ENCODE measurements at regions of chr16 and their contacts with region 1.

Region 1: GRCh38 chr16:74998481-74999218 is at the start of gene ZNRF1:
- DNase-seq: peak; percentile 69 to 80
- ATAC-seq: peak; percentile 86
- H3K4me3 ChIP-seq: peak within 1 kb of the TSS; percentile 86 to 100 (median 94)
- H3K27ac ChIP-seq: peak within 1 kb of the TSS; percentile 82 to 94 (median 88)
- H3K4me1 ChIP-seq: peaks cover 20 to 24% of the 10 kb centered on the region in 2 donors
- H3K27me3 ChIP-seq: no peaks in the 10 kb centered on the region
- CTCF ChIP-seq: peak; percentile 83 to 90 (median 89)
- POLR2A ChIP-seq: peak; percentile 63 to 81
- total RNA-seq, gene ZNRF1: 21.7 to 37.1 (median 30.2) TPM

Region 2: DNA sequence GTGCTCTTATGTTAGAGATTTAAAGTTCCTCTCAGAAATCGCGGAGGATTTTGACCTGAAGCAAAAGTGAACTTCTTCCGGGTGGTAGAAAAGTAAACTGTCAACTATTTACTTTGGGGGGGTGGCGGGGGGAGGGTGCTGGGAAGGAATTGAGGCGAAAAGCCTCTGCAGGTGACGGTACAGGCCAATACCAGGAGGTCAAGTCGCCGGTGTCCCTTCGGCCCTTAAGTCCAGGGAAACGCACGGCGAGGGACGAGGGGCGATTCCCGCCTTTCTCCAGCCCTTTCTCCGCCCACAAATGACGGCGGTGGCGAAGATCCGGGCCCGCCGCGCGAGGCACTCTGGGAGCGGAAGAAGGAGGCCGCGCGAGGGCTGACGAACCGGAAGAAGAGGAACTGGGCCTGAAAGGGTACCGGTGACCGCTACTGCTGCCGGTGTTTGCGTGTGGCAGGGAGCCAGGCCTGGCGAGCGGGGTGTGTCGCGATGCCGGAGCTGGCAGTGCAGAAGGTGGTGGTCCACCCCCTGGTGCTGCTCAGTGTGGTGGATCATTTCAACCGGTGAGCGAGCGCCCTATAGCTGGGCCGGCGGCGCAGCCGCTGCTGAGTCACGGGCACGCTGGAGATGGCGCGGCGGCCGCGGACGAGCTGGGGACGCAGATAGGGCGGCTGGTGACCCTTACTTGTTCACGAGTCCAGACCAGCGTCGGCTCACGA is 702.1 kb before region 1 on chr16 and contains the start of gene PSMD7:
- in situ Hi-C with region 1: no loop called
- intact Hi-C with region 1: loop called (anchors 5 kb)
- DNase-seq: peak; percentile 86 to 89
- ATAC-seq: peak; percentile 96 to 97
- H3K4me3 ChIP-seq: peak within 1 kb of the TSS; percentile 76 to 96 (median 91)
- H3K27ac ChIP-seq: peak within 1 kb of the TSS; percentile 94 to 98 (median 95)
- H3K4me1 ChIP-seq: peaks cover 15 to 41% of the 10 kb centered on the region in 2 donors
- H3K27me3 ChIP-seq: no peaks in the 10 kb centered on the region
- CTCF ChIP-seq: no peak
- POLR2A ChIP-seq: peak; percentile 87 to 95
- total RNA-seq, gene PSMD7: 190 to 267 (median 224) TPM

Region 3: DNA sequence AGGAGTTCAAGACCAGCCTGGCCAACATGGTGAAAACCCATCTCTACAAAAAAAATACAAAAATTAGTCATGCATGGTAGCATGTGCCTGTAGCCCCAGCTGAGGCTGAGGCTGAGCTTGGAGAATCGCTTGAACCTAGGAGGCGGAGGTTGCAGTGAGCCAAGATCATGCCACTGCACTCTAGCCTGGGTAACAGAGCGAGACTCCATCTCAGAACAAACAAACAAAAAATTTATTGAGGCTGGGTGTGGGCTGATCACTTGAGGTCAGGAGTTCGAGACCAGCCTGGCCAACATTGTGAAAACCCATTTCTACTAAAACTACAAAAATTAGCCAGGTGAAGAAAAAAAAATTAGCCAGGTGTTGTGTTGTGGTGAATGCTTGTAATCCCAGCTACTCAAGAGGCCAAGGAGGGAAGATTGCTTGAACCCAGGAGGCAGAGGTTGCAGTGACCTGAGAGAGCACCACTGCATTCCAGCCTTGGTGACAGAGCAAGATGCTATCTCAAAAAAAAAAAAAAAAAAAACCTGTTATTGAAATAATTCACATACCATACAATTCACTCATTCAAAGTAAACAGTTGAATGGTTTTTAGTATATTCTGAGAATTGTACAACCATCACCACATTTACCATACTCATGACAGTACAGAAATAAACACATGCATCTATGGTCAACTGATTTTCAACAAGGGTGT is 31.1 kb after region 1 on chr16:
- in situ Hi-C with region 1: no loop called
- intact Hi-C with region 1: no loop called
- DNase-seq: no peak
- ATAC-seq: no peak
- H3K4me3 ChIP-seq: no peak overlapping the region
- H3K27ac ChIP-seq: no peak overlapping the region
- H3K4me1 ChIP-seq: peaks cover 14 to 19% of the 10 kb centered on the region in 2 donors
- H3K27me3 ChIP-seq: no peaks in the 10 kb centered on the region
- CTCF ChIP-seq: no peak
- POLR2A ChIP-seq: no peak

Region 4: GRCh38 chr16:75110637-75111513 is 112.2 kb after region 1 on chr16:
- in situ Hi-C with region 1: loop called (anchors 5 kb)
- intact Hi-C with region 1: loop called (anchors 1 kb)
- DNase-seq: peak; percentile 86 to 94
- ATAC-seq: peak; percentile 47 to 50
- H3K4me3 ChIP-seq: peak overlapping the region; percentile 32 to 38 (median 34)
- H3K27ac ChIP-seq: peak overlapping the region; percentile 97 to 99 (median 97)
- H3K4me1 ChIP-seq: peaks cover 73 to 81% of the 10 kb centered on the region in 2 donors
- H3K27me3 ChIP-seq: no peaks in the 10 kb centered on the region
- CTCF ChIP-seq: peak; percentile 92 to 98 (median 95)
- POLR2A ChIP-seq: peak in 1 of 2 donors; percentile 12

Region 5: DNA sequence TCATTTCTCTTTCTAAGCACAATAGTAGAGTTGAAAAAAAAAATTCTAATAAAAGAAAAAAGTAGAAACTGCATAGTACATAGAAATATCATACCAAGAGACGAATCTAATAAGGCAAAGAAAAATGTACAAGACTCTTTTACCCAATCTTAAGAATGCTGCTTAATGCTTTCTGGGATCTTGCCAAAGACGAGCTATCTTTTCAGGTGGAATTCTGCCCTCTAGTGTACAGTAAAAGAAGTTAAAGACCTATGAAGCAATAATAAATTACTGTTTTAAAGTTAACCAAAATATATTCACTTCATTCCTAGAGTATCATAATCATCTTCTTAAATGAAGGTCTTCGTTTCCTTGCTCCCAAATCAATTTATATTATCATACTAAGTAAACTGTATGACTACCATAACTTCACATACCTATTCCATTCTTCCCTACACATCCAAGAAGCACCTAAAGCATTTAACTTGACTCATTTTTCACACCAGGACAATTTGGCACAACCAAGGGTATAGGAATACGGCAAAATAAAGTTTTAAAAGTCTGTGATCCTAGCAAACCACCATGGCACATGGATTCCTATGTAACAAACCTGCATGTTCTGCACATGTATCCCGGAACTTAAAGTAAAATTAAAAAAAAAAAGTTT is 387.0 kb after region 1 on chr16:
- in situ Hi-C with region 1: loop called in 1 of 4 experiments (anchors 25 kb)
- intact Hi-C with region 1: no loop called
- DNase-seq: no peak
- ATAC-seq: peak; percentile 60 to 64
- H3K4me3 ChIP-seq: no peak overlapping the region
- H3K27ac ChIP-seq: peak overlapping the region in 1 of 4 donors; percentile 11
- H3K4me1 ChIP-seq: peaks cover 3 to 4% of the 10 kb centered on the region in 2 donors
- H3K27me3 ChIP-seq: no peaks in the 10 kb centered on the region
- CTCF ChIP-seq: peak; percentile 73 to 94 (median 77)
- POLR2A ChIP-seq: no peak

Region 6: DNA sequence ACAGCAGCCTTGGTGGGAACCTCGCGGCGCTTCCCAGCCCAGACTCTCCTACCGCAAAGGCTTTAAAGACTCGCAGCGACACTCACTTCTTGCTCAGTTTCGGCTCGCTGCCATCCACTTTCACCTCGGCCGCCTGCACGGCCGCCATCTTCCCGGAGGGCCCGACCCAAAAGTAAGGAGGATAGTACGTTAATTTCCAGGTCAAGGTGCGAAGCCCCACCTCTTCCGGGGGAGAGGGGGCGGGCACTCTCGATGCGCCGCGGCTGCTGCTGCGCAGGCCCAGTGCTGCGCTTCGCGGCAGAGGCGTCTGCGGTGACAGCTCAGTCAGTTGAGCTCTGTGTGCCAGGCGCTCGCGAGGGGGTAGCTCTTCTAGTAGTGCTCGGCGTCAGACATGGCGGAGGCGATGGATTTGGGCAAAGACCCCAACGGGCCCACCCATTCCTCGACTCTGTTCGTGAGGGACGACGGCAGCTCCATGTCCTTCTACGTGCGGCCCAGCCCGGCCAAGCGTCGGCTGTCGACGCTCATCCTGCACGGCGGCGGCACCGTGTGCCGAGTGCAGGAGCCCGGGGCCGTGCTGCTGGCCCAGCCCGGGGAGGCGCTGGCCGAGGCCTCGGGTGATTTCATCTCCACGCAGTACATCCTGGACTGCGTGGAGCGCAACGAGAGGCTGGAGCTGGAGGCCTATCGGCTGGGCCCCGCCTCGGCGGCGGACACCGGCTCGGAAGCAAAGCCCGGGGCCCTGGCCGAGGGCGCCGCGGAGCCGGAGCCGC is 649.0 kb after region 1 on chr16 and contains the starts of genes KARS1 and TERF2IP:
- in situ Hi-C with region 1: loop called in 1 of 4 experiments (anchors 25 kb)
- intact Hi-C with region 1: no loop called
- DNase-seq: peak; percentile 93 to 94
- ATAC-seq: peak; percentile 92
- H3K4me3 ChIP-seq: peak within 1 kb of the TSS; percentile 85 to 99 (median 92)
- H3K27ac ChIP-seq: peak within 1 kb of the TSS; percentile 95 to 98 (median 97)
- H3K4me1 ChIP-seq: peaks cover 58 to 59% of the 10 kb centered on the region in 2 donors
- H3K27me3 ChIP-seq: no peaks in the 10 kb centered on the region
- CTCF ChIP-seq: no peak
- POLR2A ChIP-seq: peak; percentile 97
- total RNA-seq, gene KARS1: 183 to 251 (median 206) TPM
- total RNA-seq, gene TERF2IP: 44.5 to 73.6 (median 69.7) TPM

Measured in gastrocnemius medialis (tissue), 4 donors.